Mammary epithelial cell (primary cell): ENCODE measurements at regions of chr12 and their contacts with region 1.

Region 1: DNA sequence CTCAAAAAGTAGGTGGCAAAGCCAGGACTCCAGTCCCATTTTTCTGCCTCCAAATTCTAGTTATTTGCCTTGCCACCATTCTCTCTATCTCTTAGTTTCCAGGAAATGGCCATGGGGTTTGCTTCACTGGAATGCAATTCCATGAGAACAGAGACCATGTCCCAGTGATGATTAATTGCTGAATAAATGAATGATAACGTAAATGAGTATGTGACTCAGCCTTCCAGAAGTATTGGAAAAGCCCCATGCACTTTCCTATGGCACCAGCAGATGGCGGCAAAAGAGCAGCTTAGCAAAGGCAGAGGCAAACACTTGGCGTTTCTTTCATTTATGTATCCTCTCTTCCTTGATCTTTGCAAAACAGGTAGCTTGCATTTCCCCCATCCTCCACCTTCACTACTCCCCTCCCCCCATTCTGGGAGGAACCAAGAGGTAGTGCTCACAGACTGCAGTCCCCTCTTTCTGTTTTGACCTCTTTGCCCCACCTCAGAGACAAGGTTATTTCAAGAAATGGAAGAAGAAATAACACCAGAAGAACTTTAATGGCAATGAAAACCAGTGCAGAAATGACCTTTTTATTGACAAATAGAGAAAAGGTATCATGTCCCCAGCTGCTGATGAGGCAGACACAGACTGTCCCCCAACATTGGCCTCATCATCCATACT is 21.3 kb downstream of the TBX3 start:
- DNase-seq: peak; percentile 78
- H3K4me3 ChIP-seq: no peak overlapping the region
- H3K27ac ChIP-seq: no peak overlapping the region
- H3K4me1 ChIP-seq: peaks cover 4% of the 10 kb centered on the region
- H3K27me3 ChIP-seq: no peaks in the 10 kb centered on the region
- CTCF ChIP-seq: peak; percentile 89 to 95

Region 2: GRCh38 chr12:114430306-114430705 is 232.3 kb before region 1 on chr12:
- CTCF ChIA-PET with region 1: no interaction called
- dilution Hi-C with region 1: no loop called
- in situ Hi-C with region 1: no loop called
- intact Hi-C with region 1: no loop called
- DNase-seq: no peak
- H3K4me3 ChIP-seq: no peak overlapping the region
- H3K27ac ChIP-seq: no peak overlapping the region
- H3K4me1 ChIP-seq: no peaks in the 10 kb centered on the region
- H3K27me3 ChIP-seq: no peaks in the 10 kb centered on the region
- CTCF ChIP-seq: no peak

Region 3: DNA sequence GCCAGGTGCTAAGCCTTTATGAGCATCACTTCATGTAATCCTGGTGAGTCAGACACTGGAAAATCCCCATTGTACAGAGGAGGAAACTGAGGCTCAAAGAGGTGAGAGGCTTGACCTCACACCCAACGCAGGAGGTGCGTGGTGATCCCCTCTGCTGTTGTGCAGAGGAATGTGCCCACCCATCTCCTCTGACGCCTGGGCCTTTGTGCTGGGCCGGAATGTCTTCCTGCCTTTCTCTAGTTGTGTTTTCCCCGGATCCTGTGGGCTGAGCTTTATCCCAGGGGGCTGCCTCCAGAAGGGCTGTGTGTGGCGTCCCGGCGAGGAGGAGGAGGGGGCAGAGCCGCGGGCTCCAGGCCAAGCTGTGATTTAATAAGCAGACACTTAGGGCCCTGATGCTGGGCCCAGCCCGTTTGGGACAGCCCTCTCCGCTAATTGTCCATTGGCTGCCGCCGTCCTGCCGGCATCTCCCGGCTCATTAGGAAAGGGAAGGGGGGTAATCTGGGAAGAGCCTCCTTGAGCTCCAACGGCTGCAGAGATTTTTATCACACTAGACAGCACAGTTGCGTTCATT is 961.2 kb after region 1 on chr12:
- CTCF ChIA-PET with region 1: no interaction called
- dilution Hi-C with region 1: no loop called
- in situ Hi-C with region 1: loop called in 1 of 2 experiments (anchors 10 kb)
- intact Hi-C with region 1: no loop called
- DNase-seq: no peak
- H3K4me3 ChIP-seq: no peak overlapping the region
- H3K27ac ChIP-seq: no peak overlapping the region
- H3K4me1 ChIP-seq: no peaks in the 10 kb centered on the region
- H3K27me3 ChIP-seq: no peaks in the 10 kb centered on the region
- CTCF ChIP-seq: no peak

Region 4: DNA sequence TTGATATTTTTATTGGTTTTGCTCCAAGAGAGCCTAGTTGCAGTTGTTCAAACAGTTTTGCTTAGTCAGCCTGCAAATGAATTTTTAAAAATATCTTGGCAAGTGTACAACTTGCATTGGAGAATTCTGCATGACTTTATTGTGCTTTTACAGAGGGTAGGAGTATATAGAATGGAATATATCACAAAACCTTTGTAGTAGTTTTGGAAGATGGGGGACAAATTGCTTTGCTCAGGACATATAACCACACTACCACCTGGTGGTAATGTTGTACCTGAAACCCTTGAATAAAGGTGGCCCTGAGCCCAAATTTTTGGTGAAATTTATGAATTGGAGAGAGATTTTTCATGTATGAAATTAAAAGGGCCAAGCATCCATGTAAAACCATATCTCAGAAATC is 969.7 kb after region 1 on chr12:
- CTCF ChIA-PET with region 1: interaction called, 6 read pairs
- dilution Hi-C with region 1: no loop called
- in situ Hi-C with region 1: loop called (anchors 10 kb)
- intact Hi-C with region 1: loop called (anchors 1 kb)
- DNase-seq: peak; percentile 8
- H3K4me3 ChIP-seq: no peak overlapping the region
- H3K27ac ChIP-seq: no peak overlapping the region
- H3K4me1 ChIP-seq: no peaks in the 10 kb centered on the region
- H3K27me3 ChIP-seq: peaks cover 3% of the 10 kb centered on the region
- CTCF ChIP-seq: peak; percentile 23 to 61